ENCODE measurements at regions of chr17 and their contacts with region 1.

Region 1: DNA sequence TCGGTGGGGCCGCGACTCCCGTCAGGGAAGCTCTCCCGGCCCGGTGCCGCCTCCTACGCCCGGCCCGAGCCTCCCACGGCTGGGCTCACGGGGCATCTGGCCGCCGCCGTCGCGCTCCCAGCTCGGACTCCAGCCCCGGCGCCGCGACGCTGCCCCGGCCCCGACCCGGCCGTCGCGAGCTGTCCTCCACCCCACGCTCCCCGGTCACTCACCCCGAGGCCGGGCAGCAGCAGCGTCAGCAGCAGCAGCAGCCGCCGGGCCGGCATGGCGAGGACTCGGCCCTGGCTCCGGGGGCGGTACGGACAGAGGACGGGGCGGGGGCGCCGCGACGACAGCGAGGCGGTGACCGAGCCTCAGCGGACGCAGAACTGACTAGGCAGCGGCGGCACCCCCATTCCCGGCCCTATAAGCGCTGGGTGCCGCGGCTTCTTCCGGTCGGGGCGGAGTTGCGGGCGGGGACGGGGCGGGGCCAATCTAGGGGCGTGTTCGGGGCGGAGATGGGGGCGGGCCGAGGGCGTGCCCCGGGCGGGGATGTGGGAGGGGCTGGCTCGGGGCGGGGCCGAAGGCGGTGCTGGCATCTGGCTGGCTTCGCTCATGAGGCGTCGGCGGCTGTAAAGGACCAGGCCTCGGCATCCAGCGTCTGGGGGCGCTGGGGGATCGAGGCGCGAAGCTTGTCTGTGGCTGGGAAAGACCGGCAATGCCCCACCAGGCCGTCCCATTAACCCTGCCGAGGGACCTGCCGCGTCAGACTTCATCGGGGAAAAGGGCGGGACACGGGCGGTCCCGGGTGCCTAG is at the start of gene ERN1:
- DNase-seq: peak; percentile 91
- ATAC-seq: peak; percentile 88
- H3K4me3 ChIP-seq: peak within 1 kb of the TSS; percentile 92
- H3K27ac ChIP-seq: peak within 1 kb of the TSS; percentile 47
- H3K4me1 ChIP-seq: peaks cover 24% of the 10 kb centered on the region
- H3K27me3 ChIP-seq: no peaks in the 10 kb centered on the region
- CTCF ChIP-seq: no peak
- total RNA-seq, gene ERN1: 13.5 and 17.9 TPM in 2 replicates

Region 2: GRCh38 chr17:63934183-63935112 is 195.5 kb before region 1 on chr17:
- CTCF ChIA-PET with region 1: no interaction called
- POLR2A ChIA-PET with region 1: no interaction called
- intact Hi-C with region 1: no loop called
- DNase-seq: no peak
- ATAC-seq: no peak
- H3K4me3 ChIP-seq: no peak overlapping the region
- H3K27ac ChIP-seq: no peak overlapping the region
- H3K4me1 ChIP-seq: no peaks in the 10 kb centered on the region
- H3K27me3 ChIP-seq: no peaks in the 10 kb centered on the region
- CTCF ChIP-seq: no peak

Region 3: DNA sequence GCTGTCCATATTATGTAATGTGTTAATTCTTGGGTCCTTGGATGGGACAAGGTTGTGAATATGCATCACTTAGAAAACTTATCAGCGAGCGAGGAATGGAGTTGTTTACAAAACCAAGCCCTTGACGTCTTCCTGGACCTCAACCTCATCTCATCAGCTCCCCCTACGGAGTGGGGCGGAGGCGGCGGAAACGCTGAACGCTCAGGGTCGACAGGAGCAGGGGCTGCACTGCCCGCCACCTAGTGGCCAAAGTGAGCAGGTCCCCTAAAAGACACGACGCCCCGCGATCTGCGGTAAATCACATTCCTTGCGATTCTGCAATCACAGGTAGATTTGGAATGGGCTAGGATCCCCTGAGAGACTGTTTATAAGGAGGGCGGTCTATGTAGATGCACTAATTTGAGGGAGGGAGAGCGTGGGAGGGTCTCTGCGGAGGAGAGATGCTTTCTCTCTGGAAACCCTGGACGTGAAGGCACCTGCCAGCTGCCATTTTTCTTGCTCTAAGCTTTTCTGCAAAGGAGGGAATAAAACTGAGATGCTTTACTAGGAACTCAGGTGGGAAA is 104.1 kb before region 1 on chr17:
- CTCF ChIA-PET with region 1: interaction called, 296 read pairs
- POLR2A ChIA-PET with region 1: interaction called, 9 read pairs
- intact Hi-C with region 1: loop called (anchors 1 kb)
- DNase-seq: peak; percentile 89
- ATAC-seq: peak; percentile 87
- H3K4me3 ChIP-seq: peak overlapping the region; percentile 70
- H3K27ac ChIP-seq: no peak overlapping the region
- H3K4me1 ChIP-seq: peaks cover 4% of the 10 kb centered on the region; the same call in 1 of the 2 replicates
- H3K27me3 ChIP-seq: no peaks in the 10 kb centered on the region
- CTCF ChIP-seq: peak; percentile 99

Region 4: DNA sequence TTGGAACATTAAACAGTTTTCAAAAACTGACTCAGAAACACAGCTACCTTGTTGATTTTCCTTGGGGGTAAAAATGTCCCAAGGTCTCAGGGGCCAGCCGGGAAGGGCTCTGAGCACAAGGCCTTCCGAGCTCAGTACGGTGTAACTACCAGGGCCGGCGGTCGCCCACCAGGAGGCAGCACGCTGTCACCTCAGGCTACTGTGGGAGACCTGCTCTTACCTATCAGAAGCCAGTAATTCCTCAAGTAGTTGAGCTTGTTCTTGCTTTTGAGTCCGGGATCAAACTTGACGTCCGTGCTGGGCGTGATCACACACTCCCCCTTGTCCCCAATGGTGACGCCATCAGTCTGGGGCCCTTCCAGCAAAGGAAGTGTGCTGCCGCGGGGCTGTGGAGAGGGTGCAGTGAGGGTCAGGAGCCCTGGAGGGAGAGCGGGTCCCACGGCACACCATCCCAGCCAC is 66.2 kb before region 1 on chr17:
- CTCF ChIA-PET with region 1: interaction called, 48 read pairs
- POLR2A ChIA-PET with region 1: interaction called, 6 read pairs
- intact Hi-C with region 1: loop called (anchors 1 kb)
- DNase-seq: peak; percentile 40
- ATAC-seq: peak; percentile 64
- H3K4me3 ChIP-seq: no peak overlapping the region
- H3K27ac ChIP-seq: no peak overlapping the region
- H3K4me1 ChIP-seq: peaks cover 21% of the 10 kb centered on the region
- H3K27me3 ChIP-seq: no peaks in the 10 kb centered on the region
- CTCF ChIP-seq: peak; percentile 75

Region 5: DNA sequence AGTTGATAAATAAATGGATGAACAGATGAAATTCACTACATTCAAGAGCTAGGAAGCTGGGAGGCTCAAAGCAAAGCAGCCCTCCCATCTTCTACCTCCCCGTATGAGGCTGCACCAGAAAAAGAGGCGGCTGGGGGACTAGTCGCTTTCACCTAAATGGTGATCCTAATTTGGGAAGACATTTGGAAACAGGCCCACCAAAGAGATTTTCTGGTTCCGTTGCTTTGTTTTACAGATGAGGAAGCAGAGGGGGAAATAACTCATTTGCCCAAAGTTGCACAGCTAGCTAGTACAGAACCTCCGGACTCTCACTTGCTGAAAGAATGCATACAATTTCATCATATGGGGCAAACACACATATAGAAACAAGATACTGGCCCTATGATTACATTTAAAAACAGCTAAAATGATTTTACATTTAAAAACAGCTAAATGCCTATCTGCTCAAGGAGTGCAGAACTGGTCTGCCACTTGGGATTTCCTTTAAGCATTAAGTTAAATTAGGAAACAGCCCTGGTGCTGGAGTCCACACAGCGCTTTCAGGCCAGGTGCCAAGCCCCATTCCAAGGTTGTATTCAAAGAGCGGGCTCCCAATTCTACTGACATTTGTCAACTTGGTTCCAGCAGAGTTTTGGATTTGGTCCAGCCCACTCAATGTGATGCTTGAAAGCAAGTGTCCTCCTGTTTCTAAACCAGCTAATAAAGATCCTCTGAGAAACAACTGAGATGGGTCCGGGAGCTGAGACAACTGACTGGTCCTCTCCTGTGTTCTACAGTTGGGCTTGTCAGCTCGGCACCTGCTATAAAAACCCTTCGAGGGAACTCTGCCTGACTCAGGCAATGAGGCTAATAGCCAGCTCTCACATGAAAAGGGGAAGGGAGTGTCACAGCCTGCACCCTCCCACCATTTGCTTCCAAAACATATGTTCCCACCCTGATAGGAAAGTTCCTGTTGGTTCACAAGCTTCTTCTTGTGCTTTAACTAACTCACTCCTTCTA is 11.7 kb before region 1 on chr17:
- CTCF ChIA-PET with region 1: no interaction called
- POLR2A ChIA-PET with region 1: interaction called, 19 read pairs
- intact Hi-C with region 1: no loop called
- DNase-seq: no peak
- ATAC-seq: peak; percentile 13; the same call in 1 of the 2 replicates
- H3K4me3 ChIP-seq: no peak overlapping the region
- H3K27ac ChIP-seq: no peak overlapping the region
- H3K4me1 ChIP-seq: peaks cover 42% of the 10 kb centered on the region
- H3K27me3 ChIP-seq: no peaks in the 10 kb centered on the region
- CTCF ChIP-seq: no peak

Region 6: DNA sequence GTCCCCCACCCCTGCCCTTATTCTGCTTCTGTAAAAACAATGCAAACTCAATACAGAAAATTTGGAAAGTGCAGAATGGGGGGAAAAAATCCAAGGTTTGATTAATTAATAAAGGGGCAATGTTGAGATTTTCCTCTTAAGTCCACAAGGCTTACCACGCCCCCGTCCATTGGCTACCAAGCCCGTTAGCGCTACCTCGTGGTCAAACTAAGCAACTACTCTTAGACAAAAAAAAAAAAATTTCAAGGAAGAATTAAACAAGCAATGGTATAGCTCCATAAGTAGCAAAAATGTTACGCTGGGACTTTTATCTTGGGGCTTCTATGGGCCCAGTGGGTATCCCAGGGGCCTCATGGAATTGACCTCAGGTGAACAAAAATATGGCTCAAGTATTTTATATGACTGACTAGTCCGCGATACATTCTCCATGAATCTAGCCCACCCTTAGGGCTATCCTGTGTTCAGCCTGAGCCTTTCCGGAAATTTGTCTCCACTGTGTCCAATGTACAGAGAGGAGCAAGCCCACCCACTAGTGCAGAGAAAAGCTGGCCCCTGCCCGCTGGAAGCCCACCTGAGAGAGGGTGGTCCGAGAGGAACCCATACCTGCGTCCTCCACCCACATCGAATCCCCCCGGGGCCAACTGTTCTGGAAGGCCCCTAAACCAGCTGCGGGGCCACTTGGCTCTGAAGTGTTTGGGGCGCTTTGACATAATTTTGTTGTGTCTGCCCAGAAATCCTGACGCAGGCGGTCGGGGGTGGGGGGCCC is 152.2 kb after region 1 on chr17:
- CTCF ChIA-PET with region 1: interaction called, 12 read pairs
- POLR2A ChIA-PET with region 1: no interaction called
- intact Hi-C with region 1: no loop called
- DNase-seq: peak; percentile 85
- ATAC-seq: peak; percentile 38
- H3K4me3 ChIP-seq: peak overlapping the region; percentile 2; the same call in 1 of the 2 replicates
- H3K27ac ChIP-seq: no peak overlapping the region
- H3K4me1 ChIP-seq: peaks cover 14% of the 10 kb centered on the region
- H3K27me3 ChIP-seq: no peaks in the 10 kb centered on the region
- CTCF ChIP-seq: peak; percentile 95

Measured in PC-3 (cell line).